K562 (cell line): ENCODE measurements at regions of chr1 and their contacts with region 1.

Region 1: GRCh38 chr1:33295450-33296081 is 25.3 kb downstream of the A3GALT2 start:
- DNase-seq: peak; percentile 89 to 91 (median 90)
- ATAC-seq: peak; percentile 96
- H3K4me3 ChIP-seq: no peak overlapping the region
- H3K27ac ChIP-seq: no peak overlapping the region
- H3K4me1 ChIP-seq: peaks cover 0 to 6% of the 10 kb centered on the region in 2 experiments; a peak in 1 of 5 replicates
- H3K27me3 ChIP-seq: peaks cover 0 to 23% of the 10 kb centered on the region in 2 experiments; a peak in 3 of 5 replicates
- CTCF ChIP-seq: peak; percentile 95 to 98 (median 98)
- EP300 ChIP-seq: no peak
- POLR2A ChIP-seq: no peak
- RAD21 ChIP-seq: peak; percentile 93 to 97

Region 2: GRCh38 chr1:33137800-33138199 is 157.8 kb before region 1 on chr1:
- CTCF ChIA-PET with region 1: no interaction called
- POLR2A ChIA-PET with region 1: no interaction called
- in situ Hi-C with region 1: no loop called
- intact Hi-C with region 1: loop called (anchors 10 kb)
- DNase-seq: peak; percentile 47 to 58 (median 54)
- ATAC-seq: peak; percentile 73
- H3K4me3 ChIP-seq: no peak overlapping the region
- H3K27ac ChIP-seq: no peak overlapping the region
- H3K4me1 ChIP-seq: peaks cover 0 to 6% of the 10 kb centered on the region in 2 experiments; a peak in 3 of 5 replicates
- H3K27me3 ChIP-seq: peaks cover 6 to 33% of the 10 kb centered on the region in 2 experiments; a peak in 4 of 5 replicates
- CTCF ChIP-seq: peak; percentile 59 to 72 (median 61)
- EP300 ChIP-seq: no peak
- POLR2A ChIP-seq: no peak
- RAD21 ChIP-seq: peak in 1 of 2 experiments; percentile 54; a peak in 2 of 4 replicates

Region 3: DNA sequence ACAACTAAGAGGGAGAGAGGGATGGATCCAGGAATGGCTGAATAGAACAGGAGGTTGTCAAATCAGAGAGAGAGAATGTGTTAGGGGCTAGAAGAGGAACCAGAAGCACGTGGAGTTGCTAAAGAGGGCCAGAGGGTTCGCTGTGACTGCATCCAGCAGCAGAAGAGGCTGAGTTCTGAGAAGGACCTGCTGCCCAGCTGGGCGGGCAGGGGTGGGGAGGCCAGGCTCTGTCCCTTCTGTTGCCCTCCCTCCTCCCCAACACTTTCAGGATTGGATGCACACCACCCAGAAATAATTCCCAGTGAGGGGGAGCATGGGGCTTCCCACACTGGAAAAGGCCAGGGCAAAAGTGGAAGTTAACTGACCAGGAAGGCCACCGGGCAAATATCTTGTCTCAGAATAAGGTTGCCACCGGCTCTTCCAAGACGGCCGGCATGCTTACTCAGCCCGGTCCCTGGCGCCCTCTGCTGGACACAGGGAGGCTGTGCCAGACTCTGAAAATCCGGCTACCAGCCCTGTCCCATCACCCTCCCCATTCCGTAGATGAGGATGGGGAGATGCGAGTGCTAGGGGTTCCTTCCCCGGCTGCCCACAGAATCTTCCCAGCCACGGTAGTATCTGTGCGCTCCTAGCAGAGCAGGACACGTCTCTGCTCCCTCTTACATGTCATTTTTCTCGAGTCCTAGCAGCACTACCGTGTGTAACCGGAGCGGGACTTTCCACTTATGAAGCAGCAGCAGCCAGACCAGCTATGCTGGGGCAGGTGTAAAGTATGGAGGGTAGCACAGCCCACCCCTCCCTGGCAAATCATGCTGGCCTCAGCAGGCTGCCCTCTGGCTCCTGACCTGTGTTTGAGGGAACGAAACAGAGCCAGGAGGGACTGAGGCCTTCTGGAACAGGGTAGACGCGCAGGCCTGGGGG is 72.2 kb after region 1 on chr1:
- CTCF ChIA-PET with region 1: interaction called, 59 read pairs
- POLR2A ChIA-PET with region 1: interaction called, 5 read pairs
- in situ Hi-C with region 1: loop called (anchors 5 kb)
- intact Hi-C with region 1: loop called (anchors 1 kb)
- DNase-seq: peak; percentile 89 to 92 (median 90)
- ATAC-seq: peak; percentile 95
- H3K4me3 ChIP-seq: no peak overlapping the region
- H3K27ac ChIP-seq: no peak overlapping the region
- H3K4me1 ChIP-seq: peaks cover 7 to 11% of the 10 kb centered on the region in 2 experiments; a peak in 4 of 5 replicates
- H3K27me3 ChIP-seq: peaks cover 23 to 38% of the 10 kb centered on the region in 2 experiments
- CTCF ChIP-seq: peak; percentile 97 to 99 (median 97)
- EP300 ChIP-seq: no peak
- POLR2A ChIP-seq: no peak
- RAD21 ChIP-seq: peak; percentile 98

Region 4: GRCh38 chr1:33472349-33472980 is 176.9 kb after region 1 on chr1 and contains the start of gene ZSCAN20:
- CTCF ChIA-PET with region 1: interaction called, 15 read pairs
- POLR2A ChIA-PET with region 1: no interaction called
- in situ Hi-C with region 1: no loop called
- intact Hi-C with region 1: loop called (anchors 1 kb)
- DNase-seq: peak; percentile 91 to 97 (median 93)
- ATAC-seq: peak; percentile 98
- H3K4me3 ChIP-seq: peak within 1 kb of the TSS; percentile 60
- H3K27ac ChIP-seq: peak within 1 kb of the TSS; percentile 27; the same call in 2 of the 3 replicates
- H3K4me1 ChIP-seq: peaks cover 3 to 5% of the 10 kb centered on the region in 2 experiments; a peak in 3 of 5 replicates
- H3K27me3 ChIP-seq: peaks cover 0 to 8% of the 10 kb centered on the region in 2 experiments; a peak in 1 of 5 replicates
- CTCF ChIP-seq: no peak
- EP300 ChIP-seq: peak; percentile 44; the same call in 1 of the 2 replicates
- POLR2A ChIP-seq: peak; percentile 76
- RAD21 ChIP-seq: no peak
- polyA plus RNA-seq, gene ZSCAN20: 0.36 to 0.58 TPM

Region 5: GRCh38 chr1:33588726-33589125 is 293.2 kb after region 1 on chr1:
- CTCF ChIA-PET with region 1: no interaction called
- POLR2A ChIA-PET with region 1: no interaction called
- in situ Hi-C with region 1: no loop called
- intact Hi-C with region 1: no loop called
- DNase-seq: no peak
- ATAC-seq: no peak
- H3K4me3 ChIP-seq: no peak overlapping the region
- H3K27ac ChIP-seq: no peak overlapping the region
- H3K4me1 ChIP-seq: no peaks in the 10 kb centered on the region
- H3K27me3 ChIP-seq: peaks cover 11 to 14% of the 10 kb centered on the region in 2 experiments; a peak in 4 of 5 replicates
- CTCF ChIP-seq: no peak
- EP300 ChIP-seq: no peak
- POLR2A ChIP-seq: no peak
- RAD21 ChIP-seq: no peak

Region 6: GRCh38 chr1:33616773-33617172 is 321.2 kb after region 1 on chr1:
- CTCF ChIA-PET with region 1: no interaction called
- POLR2A ChIA-PET with region 1: no interaction called
- in situ Hi-C with region 1: loop called (anchors 5 kb)
- intact Hi-C with region 1: loop called (anchors 2 kb)
- DNase-seq: peak in 1 of 4 experiments; percentile 23
- ATAC-seq: no peak
- H3K4me3 ChIP-seq: no peak overlapping the region
- H3K27ac ChIP-seq: no peak overlapping the region
- H3K4me1 ChIP-seq: no peaks in the 10 kb centered on the region
- H3K27me3 ChIP-seq: peaks cover 5 to 37% of the 10 kb centered on the region in 2 experiments
- CTCF ChIP-seq: no peak
- EP300 ChIP-seq: no peak
- POLR2A ChIP-seq: no peak
- RAD21 ChIP-seq: no peak